GM18951 (cell line): ENCODE measurements at regions of chr19 and their contacts with region 1.

Region 1: GRCh38 chr19:18414504-18415177 is 4.6 kb upstream of the SSBP4 start:
- POLR2A ChIP-seq: no peak

Region 2: DNA sequence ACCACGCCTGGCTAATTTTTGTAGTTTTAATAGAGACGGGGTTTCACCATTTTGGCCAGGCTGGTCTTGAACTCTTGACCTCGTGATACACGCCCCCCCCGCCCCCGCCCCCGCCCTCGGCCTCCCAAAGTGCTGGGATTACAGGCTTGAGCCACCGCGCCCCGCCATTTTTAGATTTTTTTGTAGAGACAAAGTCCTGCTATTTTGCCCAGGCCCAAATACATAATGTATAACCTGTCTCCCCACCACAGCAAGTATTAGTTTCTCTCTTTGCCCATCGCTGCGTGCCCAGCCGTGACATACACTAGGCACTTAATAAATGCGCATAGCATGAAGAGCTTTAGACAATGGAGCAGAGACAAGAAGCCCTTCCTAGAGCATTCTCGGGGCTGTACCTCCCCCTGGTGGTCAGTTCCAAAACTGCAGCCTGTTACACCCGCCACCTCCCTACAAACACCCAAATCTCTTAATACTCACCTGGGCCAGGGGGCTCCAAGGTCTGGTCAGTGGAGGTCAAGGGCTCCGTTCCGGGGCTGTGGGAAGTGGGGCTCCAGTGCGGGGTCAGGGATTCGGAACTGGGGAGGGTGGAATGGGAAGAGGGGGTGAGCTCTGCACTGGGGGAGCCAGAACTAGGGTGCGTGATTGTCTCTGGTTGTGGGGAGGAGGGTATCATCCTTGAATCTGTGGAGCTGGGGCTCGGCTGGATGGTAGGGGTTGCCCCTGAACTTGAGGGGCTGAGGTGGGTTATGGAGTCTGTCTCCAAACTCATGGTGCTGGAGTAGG is 162.9 kb before region 1 on chr19:
- in situ Hi-C with region 1: no loop called
- POLR2A ChIP-seq: no peak

Region 3: GRCh38 chr19:18349524-18350128 is 65.0 kb before region 1 on chr19:
- in situ Hi-C with region 1: loop called (anchors 5 kb)
- POLR2A ChIP-seq: no peak